Natural killer cell (primary cell): ENCODE measurements at regions of chr21 and their contacts with region 1.

Region 1: DNA sequence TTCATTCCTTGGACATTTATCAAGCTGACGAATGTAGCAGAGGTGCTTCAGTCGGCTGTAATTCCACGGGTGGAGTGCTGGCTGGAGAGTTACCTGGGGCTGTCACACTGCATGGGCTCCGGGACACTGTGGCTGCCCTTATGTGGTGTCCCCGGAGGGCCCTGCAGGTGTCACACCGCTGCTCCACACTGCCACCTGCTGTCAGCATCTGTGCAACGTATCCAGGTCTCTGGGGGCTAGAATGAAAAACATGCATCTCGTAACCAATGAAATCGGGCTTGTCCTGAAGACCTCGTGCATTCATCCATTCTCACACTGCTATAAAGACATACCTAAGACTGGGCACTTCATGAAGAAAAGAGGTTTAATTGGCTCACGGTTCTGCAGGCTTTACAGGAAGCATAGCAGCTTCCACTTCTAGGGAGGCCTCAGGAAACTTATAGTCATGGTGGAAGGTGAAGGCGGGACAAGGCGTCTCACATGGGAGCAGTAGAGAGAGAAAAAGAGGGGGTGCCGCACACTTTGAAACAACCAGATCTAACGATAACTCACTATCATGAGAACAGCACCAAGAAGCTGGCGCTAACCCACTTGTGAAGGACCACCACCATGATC is 46.7 kb upstream of the PCBP3 start:
- DNase-seq: peak; percentile 77 to 93
- ATAC-seq: peak; percentile 85 to 92 (median 86)
- H3K4me3 ChIP-seq: no peak overlapping the region
- H3K4me3 Mint-ChIP-seq: no peak overlapping the region
- H3K27ac ChIP-seq: no peak overlapping the region
- H3K27ac Mint-ChIP-seq: no peak overlapping the region
- H3K4me1 ChIP-seq: peaks cover 8% of the 10 kb centered on the region
- H3K4me1 Mint-ChIP-seq: peaks cover 7% of the 10 kb centered on the region in 2 donors
- H3K27me3 ChIP-seq: no peaks in the 10 kb centered on the region
- H3K27me3 Mint-ChIP-seq: peaks cover 12 to 18% of the 10 kb centered on the region in 2 donors
- CTCF ChIP-seq: peak; percentile 88

Region 2: GRCh38 chr21:45478115-45478801 is 118.6 kb before region 1 on chr21:
- intact Hi-C with region 1: loop called (anchors 1 kb)
- DNase-seq: peak; percentile 69 to 92
- ATAC-seq: peak; percentile 90 to 93 (median 91)
- H3K4me3 ChIP-seq: peak overlapping the region; percentile 38
- H3K4me3 Mint-ChIP-seq: peak overlapping the region; percentile 96
- H3K27ac ChIP-seq: peak overlapping the region; percentile 77
- H3K27ac Mint-ChIP-seq: peak overlapping the region; percentile 88 to 89
- H3K4me1 ChIP-seq: peaks cover 47% of the 10 kb centered on the region
- H3K4me1 Mint-ChIP-seq: peaks cover 24 to 34% of the 10 kb centered on the region in 2 donors
- H3K27me3 ChIP-seq: no peaks in the 10 kb centered on the region
- H3K27me3 Mint-ChIP-seq: no peaks in the 10 kb centered on the region
- CTCF ChIP-seq: peak; percentile 92

Region 3: GRCh38 chr21:45554477-45555175 is 42.2 kb before region 1 on chr21:
- intact Hi-C with region 1: loop called (anchors 2 kb)
- DNase-seq: peak; percentile 92 to 93
- ATAC-seq: peak; percentile 88 to 96 (median 93)
- H3K4me3 ChIP-seq: peak overlapping the region; percentile 64
- H3K4me3 Mint-ChIP-seq: peak overlapping the region; percentile 97
- H3K27ac ChIP-seq: peak overlapping the region; percentile 61
- H3K27ac Mint-ChIP-seq: peak overlapping the region; percentile 72 to 89
- H3K4me1 ChIP-seq: peaks cover 39% of the 10 kb centered on the region
- H3K4me1 Mint-ChIP-seq: peaks cover 20 to 25% of the 10 kb centered on the region in 2 donors
- H3K27me3 ChIP-seq: no peaks in the 10 kb centered on the region
- H3K27me3 Mint-ChIP-seq: peaks cover 0 to 5% of the 10 kb centered on the region in 2 donors
- CTCF ChIP-seq: peak; percentile 64